Right lobe of liver (tissue), 6 donors: ENCODE measurements at regions of chr3 and their contacts with region 1.

Region 1: GRCh38 chr3:15268033-15268631 is 62.1 kb downstream of the CAPN7 start:
- DNase-seq: peak; percentile 84 to 85 (median 84)
- ATAC-seq: peak; percentile 83 to 89 (median 88)
- H3K4me3 ChIP-seq: no peak overlapping the region
- H3K27ac ChIP-seq: no peak overlapping the region
- H3K4me1 ChIP-seq: peaks cover 0 to 4% (median 0%) of the 10 kb centered on the region in 4 donors
- H3K27me3 ChIP-seq: no peaks in the 10 kb centered on the region
- CTCF ChIP-seq: peak; percentile 93 to 96 (median 96)
- POLR2A ChIP-seq: no peak

Region 2: GRCh38 chr3:15205934-15206661 is 62.0 kb before region 1 on chr3 and contains the start of gene CAPN7:
- intact Hi-C with region 1: loop called in 1 of 2 experiments (anchors 10 kb)
- DNase-seq: peak; percentile 97
- ATAC-seq: peak; percentile 87 to 96 (median 92)
- H3K4me3 ChIP-seq: peak within 1 kb of the TSS; percentile 81 to 91 (median 81)
- H3K27ac ChIP-seq: peak within 1 kb of the TSS; percentile 89 to 94 (median 91)
- H3K4me1 ChIP-seq: peaks cover 0 to 36% (median 3%) of the 10 kb centered on the region in 4 donors
- H3K27me3 ChIP-seq: no peaks in the 10 kb centered on the region
- CTCF ChIP-seq: peak in 3 of 4 donors; percentile 28 to 39 (median 39)
- POLR2A ChIP-seq: peak; percentile 96
- total RNA-seq, gene CAPN7: 20.1 to 32.8 (median 23.1) TPM

Region 3: GRCh38 chr3:15377961-15378791 is 110.0 kb after region 1 on chr3:
- intact Hi-C with region 1: loop called (anchors 5 to 10 kb)
- DNase-seq: peak; percentile 93 to 96 (median 95)
- ATAC-seq: peak; percentile 99 to 100 (median 100)
- H3K4me3 ChIP-seq: no peak overlapping the region
- H3K27ac ChIP-seq: peak overlapping the region; percentile 7 to 78 (median 45)
- H3K4me1 ChIP-seq: peaks cover 0 to 5% (median 0%) of the 10 kb centered on the region in 4 donors
- H3K27me3 ChIP-seq: no peaks in the 10 kb centered on the region
- CTCF ChIP-seq: peak; percentile 86 to 92 (median 88)
- POLR2A ChIP-seq: no peak